Activated naive CD4-positive, alpha-beta T cell treated with anti-CD3 and anti-CD28 coated beads for 36 hours (primary cell): ENCODE measurements at regions of chr20 and their contacts with region 1.

Region 1: GRCh38 chr20:34544109-34544793 is 14.3 kb upstream of the MAP1LC3A start:
- DNase-seq: peak; percentile 51
- H3K4me3 Mint-ChIP-seq: peak overlapping the region; percentile 41
- H3K27ac Mint-ChIP-seq: no peak overlapping the region
- H3K4me1 Mint-ChIP-seq: peaks cover 22% of the 10 kb centered on the region
- H3K27me3 Mint-ChIP-seq: no peaks in the 10 kb centered on the region

Region 2: DNA sequence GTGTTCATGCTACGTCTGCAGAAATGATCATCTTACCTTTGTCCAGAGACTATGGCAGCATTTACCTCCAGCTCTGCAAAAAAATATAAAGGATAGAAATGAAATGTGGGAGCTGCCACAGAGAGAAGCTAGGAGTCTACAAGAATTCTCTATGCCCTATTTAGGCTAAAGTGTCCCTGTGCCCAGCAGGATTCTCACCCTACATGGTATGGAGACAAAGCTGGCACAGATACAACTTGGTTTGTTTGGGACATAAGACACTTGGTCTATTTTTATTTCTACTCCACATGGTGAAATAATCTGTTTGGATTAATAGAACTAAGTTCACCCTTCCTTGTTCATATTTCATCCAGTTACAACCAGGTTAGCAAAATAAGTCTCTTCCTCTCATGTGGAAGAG is 188.3 kb after region 1 on chr20:
- CTCF ChIA-PET with region 1: no interaction called
- intact Hi-C with region 1: no loop called
- DNase-seq: no peak
- H3K4me3 Mint-ChIP-seq: no peak overlapping the region
- H3K27ac Mint-ChIP-seq: no peak overlapping the region
- H3K4me1 Mint-ChIP-seq: no peaks in the 10 kb centered on the region
- H3K27me3 Mint-ChIP-seq: no peaks in the 10 kb centered on the region

Region 3: DNA sequence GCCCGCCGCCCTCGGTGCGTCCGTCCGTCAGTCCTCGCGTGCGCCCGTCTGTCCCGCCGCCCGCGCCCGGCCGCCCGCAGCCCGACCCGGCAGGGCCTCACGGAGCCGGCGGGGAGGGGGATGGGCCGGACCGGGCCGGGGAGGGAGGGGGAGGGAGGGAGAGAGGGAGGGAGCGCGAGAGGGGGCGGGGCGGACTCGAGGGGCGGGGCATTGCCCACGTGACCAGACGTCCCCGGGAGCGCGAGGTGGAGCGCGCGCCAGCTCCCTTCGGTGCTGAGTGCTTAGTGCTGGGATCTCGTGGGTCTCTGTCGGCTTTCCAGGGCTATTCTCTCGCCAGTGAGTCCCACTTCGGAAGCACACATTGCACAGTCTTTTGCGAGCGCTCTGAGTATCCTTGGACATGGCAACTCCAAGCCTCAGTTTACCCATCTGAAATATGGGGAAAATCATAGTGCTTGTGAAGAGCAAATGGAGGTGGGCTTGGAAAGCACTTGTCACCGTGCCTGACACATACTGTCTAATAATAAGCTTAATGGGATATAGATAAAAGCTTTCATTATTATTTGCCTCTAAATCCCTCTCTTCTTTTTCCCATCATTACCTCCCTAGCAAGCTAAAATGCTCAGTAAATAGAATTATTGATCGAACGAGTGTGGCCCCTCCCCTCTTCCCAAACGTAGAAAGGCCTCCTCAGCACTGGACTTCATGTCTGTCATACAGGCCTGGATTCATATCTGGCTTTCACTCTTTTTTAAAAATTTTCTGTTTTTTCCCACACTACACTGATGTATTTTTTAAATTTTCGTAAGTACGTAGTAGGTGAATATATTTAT is 281.5 kb after region 1 on chr20 and contains the start of gene NCOA6:
- CTCF ChIA-PET with region 1: no interaction called
- intact Hi-C with region 1: loop called (anchors 5 kb)
- DNase-seq: peak; percentile 88
- H3K4me3 Mint-ChIP-seq: peak within 1 kb of the TSS; percentile 97
- H3K27ac Mint-ChIP-seq: peak within 1 kb of the TSS; percentile 93
- H3K4me1 Mint-ChIP-seq: peaks cover 37% of the 10 kb centered on the region
- H3K27me3 Mint-ChIP-seq: no peaks in the 10 kb centered on the region
- total RNA-seq, gene NCOA6: 13.9 to 14.1 TPM

Region 4: DNA sequence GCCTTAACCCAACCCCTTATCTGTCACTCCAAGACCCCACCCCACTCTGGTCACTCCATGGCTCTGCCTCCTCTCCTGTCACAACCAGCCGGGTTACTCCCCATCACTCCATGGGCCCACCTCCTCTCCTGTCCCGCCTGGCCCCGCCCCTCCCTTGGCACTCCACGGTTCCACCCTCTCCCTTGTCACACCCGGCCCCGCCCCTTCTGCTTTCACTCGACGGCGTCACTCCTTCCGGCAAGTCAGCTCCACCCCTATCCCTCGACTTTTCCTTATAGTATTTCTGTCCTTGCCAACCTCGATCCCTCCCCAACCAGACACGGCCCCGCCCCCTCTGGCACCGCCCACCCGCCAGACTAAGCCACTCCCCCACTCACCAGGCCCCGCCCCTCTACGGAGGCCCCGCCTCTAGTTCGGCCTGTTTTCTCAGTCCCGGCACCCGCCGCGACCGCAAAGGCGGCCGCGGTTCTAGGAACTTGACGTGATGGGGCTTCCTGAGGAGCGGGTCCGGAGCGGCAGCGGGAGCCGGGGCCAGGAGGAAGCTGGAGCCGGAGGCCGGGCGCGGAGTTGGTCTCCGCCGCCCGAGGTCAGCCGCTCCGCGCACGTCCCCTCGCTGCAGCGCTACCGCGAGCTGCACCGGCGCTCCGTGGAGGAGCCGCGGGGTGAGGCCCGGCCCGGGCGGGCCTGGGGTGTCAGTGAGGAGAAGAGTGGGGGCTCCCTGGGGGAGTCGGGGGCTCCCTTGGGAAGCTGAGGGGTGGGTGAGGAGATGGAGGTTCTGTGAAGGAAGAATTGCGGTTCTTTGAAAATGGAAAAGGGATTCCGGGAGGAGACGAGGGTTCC is 332.1 kb after region 1 on chr20 and contains the start of gene ACSS2:
- CTCF ChIA-PET with region 1: no interaction called
- intact Hi-C with region 1: no loop called
- DNase-seq: peak; percentile 100
- H3K4me3 Mint-ChIP-seq: peak within 1 kb of the TSS; percentile 87
- H3K27ac Mint-ChIP-seq: peak within 1 kb of the TSS; percentile 85
- H3K4me1 Mint-ChIP-seq: peaks cover 59% of the 10 kb centered on the region
- H3K27me3 Mint-ChIP-seq: no peaks in the 10 kb centered on the region
- total RNA-seq, gene ACSS2: 71.3 to 73.6 TPM